Heart left ventricle (tissue), 16 donors: ENCODE measurements at regions of chr9 and their contacts with region 1.

Region 1: GRCh38 chr9:71675129-71675856 is 93.0 kb downstream of the CEMIP2 start:
- DNase-seq: no peak
- ATAC-seq: no peak
- H3K4me3 ChIP-seq: no peak overlapping the region
- H3K27ac ChIP-seq: peak overlapping the region in 1 of 12 donors; percentile 12
- H3K4me1 ChIP-seq: peaks cover 0 to 46% (median 5%) of the 10 kb centered on the region in 12 donors
- H3K27me3 ChIP-seq: no peaks in the 10 kb centered on the region
- CTCF ChIP-seq: no peak
- POLR2A ChIP-seq: no peak

Region 2: GRCh38 chr9:71628247-71628646 is 47.0 kb before region 1 on chr9:
- intact Hi-C with region 1: loop called in 2 of 10 experiments (anchors 10 kb)
- DNase-seq: no peak
- ATAC-seq: no peak
- H3K4me3 ChIP-seq: no peak overlapping the region
- H3K27ac ChIP-seq: no peak overlapping the region
- H3K4me1 ChIP-seq: peaks cover 0 to 29% (median 13%) of the 10 kb centered on the region in 12 donors
- H3K27me3 ChIP-seq: no peaks in the 10 kb centered on the region
- CTCF ChIP-seq: peak in 6 of 12 donors; percentile 10 to 36 (median 14)
- POLR2A ChIP-seq: no peak